Mammary epithelial cell (primary cell): ENCODE measurements at regions of chr2 and their contacts with region 1.

Region 1: DNA sequence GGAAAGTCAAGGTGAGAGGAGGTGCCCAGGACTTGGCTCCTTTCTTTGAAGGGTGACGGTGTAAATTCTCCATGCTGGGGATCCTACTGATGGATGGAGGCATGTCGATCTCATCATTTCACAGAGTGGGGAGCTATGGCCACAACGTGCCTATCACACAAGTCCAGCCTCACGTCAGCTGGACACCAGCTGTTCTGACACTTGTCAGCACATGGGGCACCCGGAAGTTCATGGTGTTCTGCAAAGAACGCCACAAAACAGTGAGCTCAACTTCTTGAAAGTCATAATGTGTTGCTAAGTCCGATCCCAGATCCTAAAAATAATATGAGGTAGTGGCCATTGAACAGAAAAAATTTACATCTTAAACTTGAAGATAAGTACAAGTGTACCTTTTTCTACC is 12.3 kb downstream of the PAX8 start:
- DNase-seq: no peak
- H3K4me3 ChIP-seq: no peak overlapping the region
- H3K27ac ChIP-seq: no peak overlapping the region
- H3K4me1 ChIP-seq: no peaks in the 10 kb centered on the region
- H3K27me3 ChIP-seq: no peaks in the 10 kb centered on the region
- CTCF ChIP-seq: no peak

Region 2: GRCh38 chr2:113219889-113220641 is 46.4 kb before region 1 on chr2:
- CTCF ChIA-PET with region 1: no interaction called
- dilution Hi-C with region 1: loop called (anchors 5 kb)
- in situ Hi-C with region 1: no loop called
- intact Hi-C with region 1: no loop called
- DNase-seq: no peak
- H3K4me3 ChIP-seq: no peak overlapping the region
- H3K27ac ChIP-seq: no peak overlapping the region
- H3K4me1 ChIP-seq: peaks cover 22% of the 10 kb centered on the region
- H3K27me3 ChIP-seq: no peaks in the 10 kb centered on the region
- CTCF ChIP-seq: no peak

Region 3: GRCh38 chr2:113309655-113310387 is 43.4 kb after region 1 on chr2:
- CTCF ChIA-PET with region 1: no interaction called
- dilution Hi-C with region 1: loop called (anchors 5 kb)
- in situ Hi-C with region 1: no loop called
- intact Hi-C with region 1: no loop called
- DNase-seq: peak; percentile 84
- H3K4me3 ChIP-seq: no peak overlapping the region
- H3K27ac ChIP-seq: peak overlapping the region; percentile 42
- H3K4me1 ChIP-seq: peaks cover 29% of the 10 kb centered on the region
- H3K27me3 ChIP-seq: no peaks in the 10 kb centered on the region
- CTCF ChIP-seq: no peak